ENCODE measurements at regions of chr4 and their contacts with region 1.

Region 1: GRCh38 chr4:48588230-48589097 is 98.4 kb downstream of the ZAR1 start:
- DNase-seq: no peak
- ATAC-seq: no peak
- H3K4me3 ChIP-seq: no peak overlapping the region
- H3K27ac ChIP-seq: no peak overlapping the region
- H3K4me1 ChIP-seq: no peaks in the 10 kb centered on the region
- H3K27me3 ChIP-seq: no peaks in the 10 kb centered on the region
- CTCF ChIP-seq: no peak
- POLR2A ChIP-seq: no peak

Region 2: DNA sequence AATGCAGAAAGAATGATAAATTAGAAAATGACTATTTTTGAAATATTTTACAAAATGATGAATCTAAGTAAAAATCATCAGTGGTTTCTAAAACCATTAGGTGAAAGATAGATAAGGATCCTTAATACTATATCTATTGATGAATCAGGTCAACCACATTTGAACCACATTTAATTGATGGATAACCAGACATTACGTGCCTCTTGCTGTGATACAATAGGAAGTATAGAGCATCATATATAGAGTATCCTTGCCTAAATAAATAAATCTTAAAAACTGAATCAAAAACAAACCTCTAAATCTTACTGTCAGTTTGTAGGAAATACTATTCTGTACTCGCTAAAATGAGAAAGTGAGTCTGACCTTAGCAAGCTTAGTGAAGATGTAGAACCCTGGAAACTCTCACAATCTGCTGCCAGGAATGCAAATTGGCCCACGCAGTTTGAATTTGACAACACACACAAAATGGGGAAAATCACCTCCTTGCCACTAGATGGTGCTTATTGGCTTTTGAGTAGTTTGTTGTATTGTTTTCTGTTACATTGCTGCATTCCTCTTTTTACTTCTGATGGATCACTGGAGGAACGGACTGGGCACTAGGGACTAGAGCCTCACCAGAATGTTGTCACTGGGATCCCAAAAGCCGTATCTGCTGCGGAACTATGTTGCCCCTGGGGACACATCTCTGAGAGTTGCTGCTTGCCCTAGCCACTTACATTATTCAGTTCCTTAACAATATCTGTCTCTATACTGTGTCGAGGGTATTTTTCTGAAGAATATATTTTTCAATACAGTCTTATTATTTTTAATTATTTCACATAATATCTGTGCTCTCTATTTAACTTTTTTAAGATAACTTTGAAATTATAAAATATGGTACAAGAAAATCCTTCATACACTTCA is 272.5 kb before region 1 on chr4:
- intact Hi-C with region 1: no loop called
- DNase-seq: peak in 2 of 4 donors; percentile 9 to 23
- ATAC-seq: no peak
- H3K4me3 ChIP-seq: no peak overlapping the region
- H3K27ac ChIP-seq: no peak overlapping the region
- H3K4me1 ChIP-seq: no peaks in the 10 kb centered on the region
- H3K27me3 ChIP-seq: no peaks in the 10 kb centered on the region
- CTCF ChIP-seq: peak in 6 of 7 experiments; percentile 26 to 57 (median 51)
- POLR2A ChIP-seq: no peak

Region 3: GRCh38 chr4:48635310-48635709 is 46.8 kb after region 1 on chr4:
- intact Hi-C with region 1: no loop called
- DNase-seq: no peak
- ATAC-seq: no peak
- H3K4me3 ChIP-seq: no peak overlapping the region
- H3K27ac ChIP-seq: no peak overlapping the region
- H3K4me1 ChIP-seq: no peaks in the 10 kb centered on the region
- H3K27me3 ChIP-seq: no peaks in the 10 kb centered on the region
- CTCF ChIP-seq: no peak
- POLR2A ChIP-seq: no peak

Region 4: DNA sequence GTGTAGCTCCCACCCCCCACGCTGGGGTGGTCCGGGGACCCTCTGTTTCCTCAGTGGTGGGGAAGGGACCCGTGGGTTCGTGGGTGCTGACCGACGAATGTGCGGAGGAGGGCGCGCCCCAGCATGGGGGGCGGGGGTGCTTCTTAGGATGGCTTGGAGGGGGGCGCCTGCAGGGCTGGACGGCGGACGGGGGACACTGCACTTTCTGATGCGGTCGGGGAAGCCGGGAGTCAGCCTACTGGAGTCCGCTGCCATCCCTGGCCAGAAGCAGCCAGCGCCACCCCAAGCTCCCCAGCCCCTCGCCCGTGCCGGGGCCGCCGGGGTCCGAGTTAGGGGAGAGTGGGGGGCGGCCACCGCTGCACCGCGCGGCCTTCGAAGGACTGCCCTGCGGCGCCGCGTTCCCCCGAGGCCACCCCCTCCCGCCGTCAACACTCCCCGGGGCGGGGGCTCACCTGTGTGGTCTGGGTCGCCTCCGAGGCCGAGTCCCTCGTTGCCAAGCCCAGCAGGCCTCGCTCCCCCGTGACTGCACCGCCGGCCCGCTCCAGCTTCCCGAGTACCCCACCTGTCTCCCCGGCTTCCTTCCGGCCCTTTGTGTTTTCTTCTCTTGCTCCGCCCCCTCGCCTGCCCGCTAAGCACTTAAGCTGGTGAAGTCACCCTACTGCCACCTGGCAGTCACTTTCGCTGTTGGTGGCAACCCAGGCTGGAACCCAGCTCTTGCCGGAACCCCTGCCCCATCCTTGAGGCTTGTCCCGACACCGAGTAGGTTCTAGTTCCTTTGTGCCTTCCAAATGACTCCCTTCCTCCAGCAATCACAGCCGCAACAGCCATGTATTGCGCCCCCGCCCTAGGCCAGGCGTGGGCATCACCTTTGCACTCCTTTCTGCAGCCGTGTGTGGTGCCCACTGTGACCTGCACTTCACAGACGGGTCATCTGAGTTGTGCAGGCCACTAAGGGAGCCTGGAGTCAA is 318.0 kb after region 1 on chr4 and contains the start of gene OCIAD2:
- intact Hi-C with region 1: loop called (anchors 10 kb)
- DNase-seq: peak; percentile 83 to 89 (median 89)
- ATAC-seq: peak; percentile 94
- H3K4me3 ChIP-seq: peak within 1 kb of the TSS; percentile 76
- H3K27ac ChIP-seq: peak within 1 kb of the TSS; percentile 50 to 63 (median 62)
- H3K4me1 ChIP-seq: peaks cover 18% of the 10 kb centered on the region
- H3K27me3 ChIP-seq: no peaks in the 10 kb centered on the region
- CTCF ChIP-seq: peak in 6 of 7 experiments; percentile 11 to 58 (median 42)
- POLR2A ChIP-seq: peak; percentile 69 to 87 (median 81)
- total RNA-seq, gene OCIAD2: 3.0 to 7.3 TPM

Measured in body of pancreas (tissue), 4 donors.